OCI-LY7 (cell line): ENCODE measurements at regions of chr15 and their contacts with region 1.

Region 1: GRCh38 chr15:40421246-40422157 is 15.9 kb downstream of the IVD start:
- DNase-seq: peak; percentile 58
- H3K4me3 ChIP-seq: no peak overlapping the region
- H3K27ac ChIP-seq: no peak overlapping the region
- H3K4me1 ChIP-seq: no peaks in the 10 kb centered on the region
- CTCF ChIP-seq: peak; percentile 80

Region 2: DNA sequence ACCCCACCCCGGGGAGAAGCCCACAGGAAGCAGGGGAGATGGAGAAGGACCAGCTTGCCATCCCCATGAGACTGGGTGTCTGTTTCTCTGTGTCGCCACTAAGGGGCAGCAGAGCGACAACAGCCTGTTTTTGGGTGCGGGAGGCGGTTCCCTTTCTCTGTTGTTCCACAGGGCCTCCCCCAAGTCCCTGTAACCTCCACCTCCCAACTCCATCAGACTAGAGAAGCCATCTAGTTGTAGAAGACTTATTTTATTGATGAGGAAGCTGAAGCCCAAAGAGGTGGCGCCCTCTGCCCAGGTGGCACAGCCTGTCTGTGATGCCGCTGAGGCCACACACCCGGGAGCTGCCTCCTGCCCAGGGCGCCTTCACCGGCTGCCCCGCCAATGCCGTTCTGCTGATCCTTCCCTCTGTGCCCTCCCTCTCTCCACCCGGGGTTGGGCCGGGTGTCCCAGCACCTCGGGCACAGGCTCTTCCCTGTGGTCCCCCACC is 76.8 kb before region 1 on chr15:
- CTCF ChIA-PET with region 1: no interaction called
- POLR2A ChIA-PET with region 1: no interaction called
- intact Hi-C with region 1: loop called (anchors 1 kb)
- DNase-seq: peak; percentile 71
- H3K4me3 ChIP-seq: no peak overlapping the region
- H3K27ac ChIP-seq: no peak overlapping the region
- H3K4me1 ChIP-seq: peaks cover 4% of the 10 kb centered on the region
- CTCF ChIP-seq: peak; percentile 87

Region 3: DNA sequence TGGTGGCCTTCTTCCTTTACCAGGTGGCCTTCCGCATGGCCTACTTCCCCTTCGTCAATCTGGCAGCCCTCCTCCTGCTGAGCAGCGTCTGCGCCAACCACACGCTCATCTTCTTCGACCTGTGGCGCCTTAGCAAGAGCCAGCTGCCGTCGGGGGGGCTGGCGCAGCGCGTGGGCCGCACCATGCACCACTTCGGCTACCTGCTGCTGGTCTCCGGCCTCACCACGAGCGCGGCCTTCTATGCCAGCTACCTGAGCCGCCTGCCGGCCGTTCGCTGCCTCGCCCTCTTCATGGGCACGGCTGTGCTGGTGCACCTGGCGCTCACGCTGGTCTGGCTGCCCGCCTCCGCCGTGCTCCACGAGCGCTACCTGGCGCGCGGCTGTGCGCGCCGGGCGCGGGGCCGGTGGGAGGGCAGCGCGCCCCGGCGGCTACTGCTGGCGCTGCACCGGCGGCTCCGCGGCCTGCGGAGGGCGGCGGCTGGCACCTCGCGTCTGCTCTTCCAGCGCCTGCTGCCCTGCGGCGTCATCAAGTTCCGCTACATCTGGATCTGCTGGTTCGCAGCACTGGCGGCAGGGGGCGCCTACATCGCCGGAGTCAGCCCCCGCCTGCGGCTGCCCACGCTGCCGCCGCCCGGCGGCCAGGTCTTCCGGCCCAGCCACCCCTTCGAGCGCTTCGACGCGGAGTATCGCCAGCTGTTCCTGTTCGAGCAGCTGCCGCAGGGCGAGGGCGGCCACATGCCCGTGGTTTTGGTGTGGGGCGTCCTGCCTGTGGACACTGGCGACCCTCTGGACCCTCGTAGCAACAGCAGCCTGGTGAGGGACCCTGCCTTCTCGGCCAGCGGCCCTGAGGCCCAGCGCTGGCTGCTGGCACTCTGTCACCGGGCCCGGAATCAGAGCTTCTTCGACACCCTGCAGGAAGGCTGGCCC is 53.6 kb before region 1 on chr15:
- CTCF ChIA-PET with region 1: no interaction called
- POLR2A ChIA-PET with region 1: no interaction called
- intact Hi-C with region 1: loop called (anchors 1 kb)
- DNase-seq: peak; percentile 90
- H3K4me3 ChIP-seq: peak overlapping the region; percentile 60
- H3K27ac ChIP-seq: no peak overlapping the region
- H3K4me1 ChIP-seq: peaks cover 9% of the 10 kb centered on the region
- CTCF ChIP-seq: peak; percentile 78

Region 4: DNA sequence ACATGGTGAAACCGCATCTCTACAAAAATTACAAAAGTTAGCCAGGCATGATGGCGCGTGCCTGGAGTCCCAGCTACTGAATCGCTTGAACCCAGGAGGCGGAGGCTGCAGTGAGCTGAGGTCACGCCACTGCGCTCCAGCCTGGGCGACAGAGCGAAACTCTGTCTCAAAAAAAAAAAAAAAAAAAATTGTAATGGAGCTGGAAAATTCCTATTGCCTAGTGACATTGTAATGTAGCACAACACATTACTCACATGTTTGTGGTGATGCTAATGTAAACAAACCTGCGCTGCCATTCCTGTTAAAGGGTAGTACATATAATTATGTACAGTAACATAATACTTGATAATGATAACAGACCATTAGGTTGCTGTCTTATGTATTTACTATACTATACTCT is 211.6 kb after region 1 on chr15:
- CTCF ChIA-PET with region 1: no interaction called
- POLR2A ChIA-PET with region 1: no interaction called
- intact Hi-C with region 1: no loop called
- DNase-seq: no peak
- H3K4me3 ChIP-seq: no peak overlapping the region
- H3K27ac ChIP-seq: no peak overlapping the region
- H3K4me1 ChIP-seq: no peaks in the 10 kb centered on the region
- CTCF ChIP-seq: no peak